GM12878 (cell line): ENCODE measurements at regions of chr6 and their contacts with region 1.

Region 1: DNA sequence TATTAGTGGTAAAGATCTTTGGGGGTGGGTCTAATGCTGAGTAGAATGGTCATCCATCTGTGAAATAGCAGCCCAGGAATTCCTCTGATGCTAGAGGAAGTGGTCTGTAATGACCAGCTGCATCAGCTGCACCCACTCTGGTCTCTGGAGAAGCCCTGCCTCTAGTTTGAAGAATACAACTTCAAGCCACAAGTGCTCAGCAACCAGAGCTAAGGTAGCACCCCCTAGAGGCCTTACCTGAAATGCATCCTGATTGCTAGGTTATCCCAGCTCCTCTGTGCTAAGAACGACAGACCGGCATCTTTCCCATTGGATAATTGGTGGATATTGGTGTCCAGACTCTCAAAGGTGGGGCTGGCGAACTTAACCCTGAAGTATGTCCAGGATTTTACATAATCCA is 58.2 kb downstream of the DNAH8 start:
- DNase-seq: no peak
- ATAC-seq: peak; percentile 9; the same call in 2 of the 3 replicates
- H3K4me3 ChIP-seq: no peak overlapping the region
- H3K27ac ChIP-seq: no peak overlapping the region
- H3K4me1 ChIP-seq: peaks cover 32% of the 10 kb centered on the region
- H3K27me3 ChIP-seq: no peaks in the 10 kb centered on the region
- CTCF ChIP-seq: peak; percentile 26 to 59 (median 58); a peak in 5 of 6 replicates
- EP300 ChIP-seq: no peak
- POLR2A ChIP-seq: no peak
- RAD21 ChIP-seq: peak; percentile 35; the same call in 1 of the 2 replicates

Region 2: GRCh38 chr6:38646166-38646878 is 127.0 kb before region 1 on chr6:
- CTCF ChIA-PET with region 1: no interaction called
- POLR2A ChIA-PET with region 1: no interaction called
- RAD21 ChIA-PET with region 1: no interaction called
- SMC1A ChIA-PET with region 1: no interaction called
- in situ Hi-C with region 1: no loop called
- intact Hi-C with region 1: no loop called
- DNase-seq: no peak
- ATAC-seq: no peak
- H3K4me3 ChIP-seq: no peak overlapping the region
- H3K27ac ChIP-seq: no peak overlapping the region
- H3K4me1 ChIP-seq: no peaks in the 10 kb centered on the region
- H3K27me3 ChIP-seq: no peaks in the 10 kb centered on the region
- CTCF ChIP-seq: no peak
- EP300 ChIP-seq: no peak
- POLR2A ChIP-seq: no peak
- RAD21 ChIP-seq: no peak

Region 3: DNA sequence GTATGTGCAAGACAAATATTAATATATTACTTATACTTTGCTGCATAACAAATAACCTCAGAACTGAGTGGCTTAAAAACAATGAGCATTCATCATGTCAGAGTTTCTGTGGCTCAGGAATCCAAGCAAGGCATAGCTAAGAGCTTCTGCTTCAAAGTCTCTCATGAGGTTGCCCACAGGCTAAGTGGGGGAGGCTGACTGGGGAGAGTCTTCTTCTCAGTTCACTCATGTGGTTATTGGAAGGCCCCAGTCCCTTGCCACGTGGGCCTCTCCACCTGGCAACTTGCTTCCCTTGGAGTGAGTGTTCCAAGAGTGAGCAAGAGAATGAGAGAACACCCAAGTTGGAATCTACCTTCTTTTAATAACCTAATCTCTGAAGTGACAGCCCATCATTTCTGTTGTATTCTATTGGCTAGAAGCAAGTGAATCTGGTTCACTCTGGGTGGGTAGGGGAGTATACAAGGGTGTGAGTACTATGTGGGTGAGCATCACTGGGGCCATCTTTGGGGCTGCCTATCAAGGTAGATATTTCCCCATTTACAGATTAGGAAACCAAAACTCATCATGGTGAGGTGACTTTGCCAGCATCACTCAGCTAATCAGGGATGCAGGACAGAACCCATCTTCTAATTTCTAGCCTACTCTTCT is 22.2 kb before region 1 on chr6:
- CTCF ChIA-PET with region 1: interaction called, 12 read pairs
- POLR2A ChIA-PET with region 1: no interaction called
- RAD21 ChIA-PET with region 1: no interaction called
- SMC1A ChIA-PET with region 1: interaction called, 3 read pairs
- in situ Hi-C with region 1: no loop called
- intact Hi-C with region 1: no loop called
- DNase-seq: no peak
- ATAC-seq: no peak
- H3K4me3 ChIP-seq: no peak overlapping the region
- H3K27ac ChIP-seq: no peak overlapping the region
- H3K4me1 ChIP-seq: no peaks in the 10 kb centered on the region
- H3K27me3 ChIP-seq: no peaks in the 10 kb centered on the region
- CTCF ChIP-seq: no peak
- EP300 ChIP-seq: no peak
- POLR2A ChIP-seq: no peak
- RAD21 ChIP-seq: no peak

Region 4: DNA sequence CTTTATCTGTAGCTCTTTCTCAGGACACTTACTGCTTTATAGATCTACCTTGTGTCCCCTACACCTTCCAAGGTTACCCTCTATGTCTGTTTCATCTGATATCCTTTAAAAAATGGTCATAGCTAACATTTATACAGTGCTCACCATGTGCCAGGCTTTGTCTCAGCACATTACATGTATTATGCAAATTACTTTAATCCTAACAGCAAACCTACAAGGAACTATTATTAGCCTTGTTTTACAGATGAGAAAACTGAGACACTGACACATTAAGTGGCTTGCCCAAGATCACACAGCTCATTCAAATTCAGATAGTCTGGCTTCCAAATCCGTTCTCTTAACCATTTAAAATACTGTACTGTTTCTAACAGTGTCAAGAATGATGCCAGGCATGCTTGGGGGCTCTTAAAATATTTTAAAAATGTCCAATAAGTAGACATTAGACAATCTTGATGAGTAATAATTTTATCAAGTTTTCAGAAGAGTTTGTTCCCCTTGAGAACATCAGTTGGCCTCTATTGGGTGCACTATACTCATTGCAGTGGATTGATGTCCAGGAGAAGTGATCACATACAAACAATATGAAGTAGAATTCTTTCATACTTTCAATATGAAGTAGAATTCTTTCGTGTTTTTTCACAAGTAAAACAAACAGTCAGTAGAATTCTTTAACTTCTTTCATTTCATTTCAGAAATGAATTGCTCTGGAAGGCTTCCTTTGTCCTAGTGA is 11.3 kb after region 1 on chr6:
- CTCF ChIA-PET with region 1: interaction called, 13 read pairs
- POLR2A ChIA-PET with region 1: interaction called, 3 read pairs
- RAD21 ChIA-PET with region 1: no interaction called
- SMC1A ChIA-PET with region 1: interaction called, 4 read pairs
- in situ Hi-C with region 1: no loop called
- intact Hi-C with region 1: no loop called
- DNase-seq: no peak
- ATAC-seq: no peak
- H3K4me3 ChIP-seq: no peak overlapping the region
- H3K27ac ChIP-seq: no peak overlapping the region
- H3K4me1 ChIP-seq: peaks cover 6% of the 10 kb centered on the region; the same call in 1 of the 2 replicates
- H3K27me3 ChIP-seq: no peaks in the 10 kb centered on the region
- CTCF ChIP-seq: no peak
- EP300 ChIP-seq: no peak
- POLR2A ChIP-seq: no peak
- RAD21 ChIP-seq: no peak

Region 5: GRCh38 chr6:38824243-38824894 is 51.0 kb after region 1 on chr6:
- CTCF ChIA-PET with region 1: no interaction called
- POLR2A ChIA-PET with region 1: no interaction called
- RAD21 ChIA-PET with region 1: no interaction called
- SMC1A ChIA-PET with region 1: no interaction called
- in situ Hi-C with region 1: no loop called
- intact Hi-C with region 1: no loop called
- DNase-seq: no peak
- ATAC-seq: no peak
- H3K4me3 ChIP-seq: no peak overlapping the region
- H3K27ac ChIP-seq: no peak overlapping the region
- H3K4me1 ChIP-seq: no peaks in the 10 kb centered on the region
- H3K27me3 ChIP-seq: no peaks in the 10 kb centered on the region
- CTCF ChIP-seq: no peak
- EP300 ChIP-seq: no peak
- POLR2A ChIP-seq: no peak
- RAD21 ChIP-seq: no peak